HepG2 (cell line): ENCODE measurements at regions of chr16 and their contacts with region 1.

Region 1: DNA sequence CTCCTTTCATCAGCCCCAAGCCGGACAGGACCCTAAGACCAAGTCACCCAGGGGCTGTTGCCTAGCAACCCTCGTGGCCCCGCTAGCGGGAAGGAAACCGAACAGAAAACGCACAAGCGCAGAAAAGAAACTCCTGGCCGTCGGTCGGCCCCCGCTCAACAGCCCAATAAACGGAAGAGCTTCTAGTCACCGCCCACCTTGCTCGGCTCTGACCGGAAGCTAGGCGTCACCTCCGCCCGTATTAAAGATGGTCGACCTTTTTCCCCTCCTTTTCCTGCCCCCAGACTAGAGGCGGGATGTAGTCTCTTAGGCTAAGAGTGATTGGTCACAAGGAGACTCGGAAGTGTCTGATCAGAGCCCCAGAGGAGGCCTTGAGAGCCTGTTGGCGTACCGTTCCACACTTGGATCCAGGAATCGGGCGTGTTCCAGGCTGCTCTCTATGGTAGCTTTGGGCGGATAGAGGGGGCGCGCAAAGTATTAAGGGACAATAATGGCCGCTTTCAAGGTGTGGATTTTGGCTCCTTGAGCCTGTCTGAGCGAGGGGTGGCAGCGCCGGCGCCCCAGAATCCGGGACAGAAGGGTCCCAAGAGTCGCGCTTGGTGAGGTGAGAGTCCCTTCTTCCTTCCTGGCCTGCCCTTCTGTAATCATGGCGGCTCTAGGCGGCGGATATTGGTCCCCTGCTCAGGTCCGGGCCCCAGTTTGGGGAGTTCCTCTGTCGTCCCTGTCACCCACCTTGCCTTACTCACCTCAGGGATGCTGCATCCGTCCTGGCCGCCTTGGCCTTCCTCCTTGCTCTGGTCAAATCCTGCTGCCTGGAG is at the starts of genes DHX38 and TXNL4B:
- DNase-seq: peak; percentile 100
- ATAC-seq: peak; percentile 98
- H3K4me3 ChIP-seq: peak within 1 kb of the TSS; percentile 98 to 100 (median 98)
- H3K27ac ChIP-seq: peak within 1 kb of the TSS; percentile 88
- H3K4me1 ChIP-seq: peaks cover 54% of the 10 kb centered on the region
- H3K27me3 ChIP-seq: peaks cover 0 to 4% of the 10 kb centered on the region in 2 experiments; a peak in 1 of 5 replicates
- CTCF ChIP-seq: peak; percentile 15; the same call in 1 of the 2 replicates
- EP300 ChIP-seq: peak in 1 of 2 experiments; percentile 28; a peak in 1 of 4 replicates
- POLR2A ChIP-seq: peak; percentile 69 to 95
- RAD21 ChIP-seq: no peak
- total RNA-seq, gene DHX38: 58.9 and 85.9 TPM in 2 replicates
- total RNA-seq, gene TXNL4B: 18.3 and 24.4 TPM in 2 replicates

Region 2: GRCh38 chr16:71894921-71895678 is 198.6 kb before region 1 on chr16 and contains the start of gene IST1:
- CTCF ChIA-PET with region 1: no interaction called
- POLR2A ChIA-PET with region 1: interaction called, 6 read pairs
- in situ Hi-C with region 1: no loop called
- intact Hi-C with region 1: loop called (anchors 1 kb)
- DNase-seq: peak; percentile 96
- ATAC-seq: peak; percentile 91
- H3K4me3 ChIP-seq: peak within 1 kb of the TSS; percentile 85 to 98 (median 95)
- H3K27ac ChIP-seq: peak within 1 kb of the TSS; percentile 95
- H3K4me1 ChIP-seq: peaks cover 57% of the 10 kb centered on the region
- H3K27me3 ChIP-seq: no peaks in the 10 kb centered on the region; a peak in 1 of 5 replicates
- CTCF ChIP-seq: peak; percentile 23; the same call in 1 of the 2 replicates
- EP300 ChIP-seq: peak; percentile 27 to 54; a peak in 3 of 4 replicates
- POLR2A ChIP-seq: peak; percentile 94 to 95
- RAD21 ChIP-seq: peak; percentile 59
- total RNA-seq, gene IST1: 346 and 497 TPM in 2 replicates

Region 3: DNA sequence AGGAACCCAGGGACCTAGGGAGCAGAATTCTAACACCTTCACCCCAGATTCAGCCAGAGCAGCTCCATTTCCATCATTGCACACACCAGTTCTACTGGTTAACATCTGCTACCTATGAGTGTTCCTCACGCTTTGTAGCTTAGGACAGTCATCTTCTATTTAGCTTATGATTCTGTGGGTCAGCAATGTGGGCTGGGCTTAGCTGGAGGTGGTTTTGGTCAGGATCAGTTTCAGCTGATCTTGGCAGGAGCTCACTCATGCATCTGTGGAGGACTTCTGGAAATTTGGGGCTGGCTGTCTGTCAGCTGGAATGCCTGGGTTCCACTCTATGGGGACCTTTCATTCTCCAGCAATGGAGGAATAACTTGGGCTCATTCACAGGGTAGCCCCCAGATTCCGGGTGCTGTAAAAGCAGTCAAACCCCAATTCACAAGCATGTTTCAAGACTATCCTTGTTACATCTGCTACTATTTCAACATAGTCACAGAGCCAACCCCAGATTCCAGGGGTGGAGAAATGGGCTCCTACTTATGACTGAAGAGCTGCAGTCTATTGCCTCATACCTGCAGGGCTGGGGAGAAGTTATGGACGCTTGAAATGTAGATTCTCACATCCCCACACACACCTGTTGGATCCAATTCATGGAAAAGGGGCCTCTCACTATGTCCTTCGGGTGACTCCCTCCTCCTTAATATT is 42.7 kb before region 1 on chr16:
- CTCF ChIA-PET with region 1: no interaction called
- POLR2A ChIA-PET with region 1: interaction called, 18 read pairs
- in situ Hi-C with region 1: no loop called
- intact Hi-C with region 1: no loop called
- DNase-seq: no peak
- ATAC-seq: no peak
- H3K4me3 ChIP-seq: no peak overlapping the region
- H3K27ac ChIP-seq: no peak overlapping the region
- H3K4me1 ChIP-seq: peaks cover 61% of the 10 kb centered on the region
- H3K27me3 ChIP-seq: no peaks in the 10 kb centered on the region
- CTCF ChIP-seq: no peak
- EP300 ChIP-seq: no peak
- POLR2A ChIP-seq: no peak
- RAD21 ChIP-seq: no peak

Region 4: GRCh38 chr16:72066747-72067146 is 26.9 kb before region 1 on chr16:
- CTCF ChIA-PET with region 1: interaction called, 58 read pairs
- POLR2A ChIA-PET with region 1: interaction called, 51 read pairs
- in situ Hi-C with region 1: no loop called
- intact Hi-C with region 1: loop called (anchors 1 kb)
- DNase-seq: peak; percentile 72
- ATAC-seq: peak; percentile 44
- H3K4me3 ChIP-seq: no peak overlapping the region
- H3K27ac ChIP-seq: no peak overlapping the region
- H3K4me1 ChIP-seq: peaks cover 78% of the 10 kb centered on the region
- H3K27me3 ChIP-seq: no peaks in the 10 kb centered on the region
- CTCF ChIP-seq: peak; percentile 85
- EP300 ChIP-seq: no peak
- POLR2A ChIP-seq: no peak
- RAD21 ChIP-seq: peak; percentile 87